Right ventricle myocardium superior (tissue), 1 donor: ENCODE measurements at regions of chr18 and their contacts with region 1.

Region 1: GRCh38 chr18:13893418-13893760 is 21.9 kb downstream of the MC2R start:
- DNase-seq: no peak
- ATAC-seq: no peak

Region 2: GRCh38 chr18:13746633-13747032 is 146.8 kb before region 1 on chr18:
- intact Hi-C with region 1: no loop called
- DNase-seq: no peak
- ATAC-seq: no peak

Region 3: DNA sequence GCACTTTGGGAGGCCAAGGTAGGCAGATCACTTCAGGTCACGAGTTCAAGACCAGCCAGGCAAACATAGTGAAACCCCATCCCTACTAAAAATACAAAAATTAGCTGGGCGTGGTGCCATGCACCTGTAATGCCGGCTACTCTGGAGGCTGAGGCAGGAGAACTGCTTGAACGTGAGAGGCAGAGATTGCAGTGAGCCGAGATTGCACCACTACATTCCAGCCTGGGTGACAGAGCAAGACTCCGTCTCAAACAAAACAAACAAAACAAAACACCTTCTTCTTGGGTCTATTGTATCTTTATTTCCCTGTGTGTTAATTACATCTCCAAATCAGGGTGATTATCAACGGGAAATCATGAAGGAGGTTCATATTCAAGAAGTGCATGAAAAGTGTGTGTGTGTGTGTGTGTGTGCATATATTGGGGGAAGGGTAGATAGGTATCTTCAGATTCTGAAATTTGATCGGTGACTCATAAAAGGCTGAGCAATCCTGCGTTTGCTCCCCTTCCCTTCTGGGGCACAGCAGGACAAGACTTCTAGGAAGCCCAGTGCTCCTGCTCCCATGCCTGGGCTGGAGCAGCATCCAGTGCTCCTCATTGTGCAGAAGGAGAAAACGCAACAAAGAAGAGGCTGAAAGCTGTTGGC is 43.7 kb before region 1 on chr18:
- intact Hi-C with region 1: loop called (anchors 10 kb)
- DNase-seq: no peak
- ATAC-seq: no peak